HepG2 (cell line): ENCODE measurements at regions of chr22 and their contacts with region 1.

Region 1: GRCh38 chr22:32265882-32266767 is 11.0 kb upstream of the SLC5A4 start:
- DNase-seq: peak; percentile 62
- ATAC-seq: peak; percentile 86
- H3K4me3 ChIP-seq: no peak overlapping the region
- H3K27ac ChIP-seq: no peak overlapping the region
- H3K4me1 ChIP-seq: 0 out of 2 replicates have a peak, but pooled peaks cover 6% of the 10 kb centered on the region
- H3K27me3 ChIP-seq: no peaks in the 10 kb centered on the region
- CTCF ChIP-seq: peak; percentile 85
- EP300 ChIP-seq: no peak
- POLR2A ChIP-seq: no peak
- RAD21 ChIP-seq: peak; percentile 70

Region 2: DNA sequence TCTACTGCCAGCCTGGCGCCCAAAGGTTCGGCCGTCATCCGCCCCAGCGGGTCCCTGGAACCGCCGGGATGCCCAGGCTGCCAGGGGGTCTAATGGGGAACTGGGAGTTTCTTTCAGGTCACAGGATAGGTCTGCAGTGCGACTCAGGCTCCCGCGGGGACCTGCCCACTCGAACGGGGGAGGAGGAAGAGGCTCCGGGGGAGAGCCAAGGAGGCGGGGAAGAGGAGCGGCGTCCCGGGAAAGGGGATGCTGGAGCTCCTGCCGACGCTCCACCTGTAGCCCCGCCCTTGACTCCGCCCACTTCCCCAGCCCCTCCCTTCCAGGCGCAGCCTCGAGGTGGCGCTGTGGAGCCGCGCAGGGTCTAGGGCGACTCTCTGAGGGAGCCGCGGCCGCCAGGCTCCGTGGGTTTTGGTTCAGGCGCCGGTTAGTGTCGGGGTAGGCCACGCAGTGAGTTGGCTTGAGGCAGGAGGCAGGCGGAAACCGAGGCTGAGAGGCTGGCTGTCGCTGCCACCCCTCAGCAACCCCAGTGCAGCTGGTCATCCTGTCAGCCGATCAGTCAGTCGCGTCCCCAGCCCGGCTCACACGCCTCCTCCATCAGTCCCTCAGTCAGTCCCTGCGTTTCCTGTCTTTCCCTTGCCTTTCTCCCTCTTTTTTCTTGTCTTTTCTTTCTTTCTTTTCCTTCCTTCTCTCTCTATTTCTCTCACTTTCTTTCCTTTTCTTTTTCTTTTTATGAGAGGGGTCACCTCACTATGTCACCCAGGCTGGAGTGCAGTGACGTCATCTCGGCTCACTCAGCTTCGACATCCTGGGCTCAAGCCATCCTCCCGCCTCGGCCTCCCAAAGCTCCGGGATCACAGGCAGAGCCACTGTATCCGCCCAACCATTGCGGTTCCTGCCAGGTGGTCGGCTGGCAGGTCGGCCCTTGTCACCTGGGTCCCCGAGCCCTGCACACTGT is 295.4 kb before region 1 on chr22:
- CTCF ChIA-PET with region 1: no interaction called
- POLR2A ChIA-PET with region 1: no interaction called
- in situ Hi-C with region 1: loop called (anchors 10 kb)
- intact Hi-C with region 1: no loop called
- DNase-seq: peak; percentile 31
- ATAC-seq: peak; percentile 83
- H3K4me3 ChIP-seq: peak overlapping the region; percentile 42 to 74 (median 46)
- H3K27ac ChIP-seq: no peak overlapping the region
- H3K4me1 ChIP-seq: peaks cover 27% of the 10 kb centered on the region
- H3K27me3 ChIP-seq: peaks cover 0 to 9% of the 10 kb centered on the region in 2 experiments; a peak in 3 of 5 replicates
- CTCF ChIP-seq: peak; percentile 94
- EP300 ChIP-seq: no peak
- POLR2A ChIP-seq: no peak
- RAD21 ChIP-seq: peak; percentile 51; the same call in 1 of the 2 replicates

Region 3: GRCh38 chr22:31977141-31977841 is 288.8 kb before region 1 on chr22:
- CTCF ChIA-PET with region 1: interaction called, 11 read pairs
- POLR2A ChIA-PET with region 1: no interaction called
- in situ Hi-C with region 1: loop called (anchors 10 kb)
- intact Hi-C with region 1: no loop called
- DNase-seq: peak; percentile 62
- ATAC-seq: peak; percentile 92
- H3K4me3 ChIP-seq: no peak overlapping the region
- H3K27ac ChIP-seq: no peak overlapping the region
- H3K4me1 ChIP-seq: peaks cover 4% of the 10 kb centered on the region
- H3K27me3 ChIP-seq: peaks cover 0 to 7% of the 10 kb centered on the region in 2 experiments; a peak in 2 of 5 replicates
- CTCF ChIP-seq: peak; percentile 93
- EP300 ChIP-seq: no peak
- POLR2A ChIP-seq: no peak
- RAD21 ChIP-seq: peak; percentile 73

Region 4: DNA sequence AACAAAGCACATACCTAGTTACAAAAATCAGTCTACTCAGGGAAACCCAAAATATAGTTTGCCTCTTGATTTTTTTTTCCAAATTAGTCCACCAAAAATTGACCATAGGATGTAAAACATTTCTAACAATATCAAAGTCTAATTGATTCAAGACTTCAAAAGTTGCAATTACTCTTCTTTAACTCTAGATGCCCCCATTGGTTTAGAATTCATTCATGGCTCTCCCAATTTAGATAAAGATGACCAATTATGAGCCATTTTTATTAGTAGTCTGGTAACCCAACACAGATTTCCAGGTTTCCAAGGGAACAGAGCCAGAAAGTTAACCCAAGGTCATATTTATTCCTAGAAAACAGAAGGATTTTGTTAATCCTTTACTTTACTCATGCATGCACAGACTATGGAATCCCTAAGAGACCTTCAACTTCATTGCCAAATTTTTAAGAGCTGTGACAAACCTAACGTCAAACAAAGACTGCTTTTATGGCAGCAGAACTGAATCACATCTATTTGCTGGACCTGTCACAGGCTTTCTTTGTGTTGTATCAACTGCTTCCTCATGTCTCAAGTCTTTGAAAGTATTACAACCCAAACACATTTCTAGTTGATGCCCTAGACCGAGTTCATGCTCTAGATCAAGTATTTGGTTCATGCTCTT is 162.3 kb before region 1 on chr22:
- CTCF ChIA-PET with region 1: interaction called, 6 read pairs
- POLR2A ChIA-PET with region 1: no interaction called
- in situ Hi-C with region 1: loop called (anchors 10 kb)
- intact Hi-C with region 1: no loop called
- DNase-seq: no peak
- ATAC-seq: no peak
- H3K4me3 ChIP-seq: no peak overlapping the region
- H3K27ac ChIP-seq: no peak overlapping the region
- H3K4me1 ChIP-seq: no peaks in the 10 kb centered on the region
- H3K27me3 ChIP-seq: no peaks in the 10 kb centered on the region
- CTCF ChIP-seq: peak; percentile 32; the same call in 1 of the 2 replicates
- EP300 ChIP-seq: no peak
- POLR2A ChIP-seq: no peak
- RAD21 ChIP-seq: no peak

Region 5: DNA sequence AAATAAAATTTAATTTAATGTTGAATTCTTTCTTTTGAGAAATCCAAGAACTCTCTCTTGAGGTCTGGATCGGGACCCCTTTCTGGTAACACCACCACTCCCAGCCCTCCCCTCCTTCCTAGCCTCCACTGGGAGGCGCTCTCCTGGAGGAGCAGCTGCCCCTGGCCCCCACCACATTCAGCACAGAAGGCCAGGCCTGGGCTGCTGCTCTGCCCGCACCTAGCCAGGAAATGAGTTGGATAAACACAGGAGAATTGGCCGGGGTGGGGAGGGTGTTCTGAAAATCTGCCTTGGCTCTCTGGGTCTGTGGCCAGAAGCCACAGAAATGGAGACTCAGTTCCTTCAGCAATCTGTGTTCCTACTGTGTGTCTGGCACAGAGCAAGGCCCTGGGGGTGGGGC is 138.2 kb before region 1 on chr22:
- CTCF ChIA-PET with region 1: no interaction called
- POLR2A ChIA-PET with region 1: no interaction called
- in situ Hi-C with region 1: no loop called
- intact Hi-C with region 1: loop called (anchors 5 kb)
- DNase-seq: no peak
- ATAC-seq: no peak
- H3K4me3 ChIP-seq: no peak overlapping the region
- H3K27ac ChIP-seq: no peak overlapping the region
- H3K4me1 ChIP-seq: no peaks in the 10 kb centered on the region
- H3K27me3 ChIP-seq: peaks cover 0 to 1% of the 10 kb centered on the region in 2 experiments; a peak in 1 of 5 replicates
- CTCF ChIP-seq: no peak
- EP300 ChIP-seq: no peak
- POLR2A ChIP-seq: no peak
- RAD21 ChIP-seq: no peak

Region 6: DNA sequence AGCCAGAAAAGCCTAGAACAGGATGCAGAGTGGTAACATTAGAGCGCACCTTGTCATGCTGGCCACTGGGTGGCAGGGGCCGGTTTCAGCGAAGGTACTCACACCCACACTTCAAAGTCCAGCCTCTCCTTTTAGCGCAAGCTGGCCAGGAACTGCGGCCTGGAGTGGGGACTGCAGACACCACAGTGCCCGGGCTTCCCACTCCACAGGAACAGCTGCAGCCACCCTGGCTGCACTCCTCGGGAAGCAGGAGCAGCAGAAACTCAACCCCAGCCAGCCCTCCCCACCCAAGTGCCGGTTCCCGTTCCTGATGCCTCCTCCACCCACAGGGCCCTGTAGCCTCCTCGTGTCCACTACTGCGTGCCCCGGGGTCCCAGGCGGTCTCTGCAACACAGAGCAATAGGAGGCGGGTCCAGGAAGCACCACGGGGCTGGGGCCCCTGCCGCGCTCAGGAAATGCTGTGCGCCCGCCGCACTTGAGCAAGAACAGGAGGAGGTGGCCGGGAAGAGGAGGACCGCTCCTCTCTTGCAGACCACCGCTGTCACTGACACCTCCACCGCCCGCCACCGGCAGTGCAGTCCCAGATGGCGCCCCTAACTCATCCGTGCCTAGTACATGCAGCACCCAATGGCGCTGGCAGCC is 63.5 kb before region 1 on chr22:
- CTCF ChIA-PET with region 1: interaction called, 20 read pairs
- POLR2A ChIA-PET with region 1: no interaction called
- in situ Hi-C with region 1: loop called (anchors 5 kb)
- intact Hi-C with region 1: loop called (anchors 1 kb)
- DNase-seq: peak; percentile 68
- ATAC-seq: peak; percentile 75
- H3K4me3 ChIP-seq: peak overlapping the region in 1 of 3 experiments; percentile 42; a peak in 2 of 6 replicates
- H3K27ac ChIP-seq: no peak overlapping the region
- H3K4me1 ChIP-seq: peaks cover 27% of the 10 kb centered on the region
- H3K27me3 ChIP-seq: peaks cover 1 to 3% of the 10 kb centered on the region in 2 experiments; a peak in 1 of 5 replicates
- CTCF ChIP-seq: peak; percentile 92
- EP300 ChIP-seq: no peak
- POLR2A ChIP-seq: no peak
- RAD21 ChIP-seq: peak; percentile 79

Region 7: DNA sequence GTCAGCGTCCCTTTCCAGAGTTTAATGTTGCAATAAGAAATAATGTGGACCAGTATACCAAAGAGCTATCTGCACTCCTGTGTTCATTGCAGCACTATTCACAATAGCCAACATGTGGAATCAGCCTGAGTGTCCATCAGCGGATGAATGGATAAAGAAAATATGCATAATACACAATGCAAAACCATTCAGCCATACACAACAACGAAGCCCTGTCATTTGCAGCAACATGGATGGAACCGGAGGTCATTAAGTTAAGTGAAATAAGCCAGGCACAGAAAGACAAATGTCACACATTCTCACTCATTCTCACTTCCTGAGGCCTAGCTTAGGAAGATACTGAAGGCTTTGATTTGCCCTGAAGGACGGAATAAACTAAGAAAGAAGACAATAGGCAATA is 33.0 kb before region 1 on chr22:
- CTCF ChIA-PET with region 1: no interaction called
- POLR2A ChIA-PET with region 1: no interaction called
- in situ Hi-C with region 1: no loop called
- intact Hi-C with region 1: no loop called
- DNase-seq: no peak
- ATAC-seq: no peak
- H3K4me3 ChIP-seq: no peak overlapping the region
- H3K27ac ChIP-seq: no peak overlapping the region
- H3K4me1 ChIP-seq: no peaks in the 10 kb centered on the region
- H3K27me3 ChIP-seq: no peaks in the 10 kb centered on the region
- CTCF ChIP-seq: no peak
- EP300 ChIP-seq: no peak
- POLR2A ChIP-seq: no peak
- RAD21 ChIP-seq: no peak

Region 8: DNA sequence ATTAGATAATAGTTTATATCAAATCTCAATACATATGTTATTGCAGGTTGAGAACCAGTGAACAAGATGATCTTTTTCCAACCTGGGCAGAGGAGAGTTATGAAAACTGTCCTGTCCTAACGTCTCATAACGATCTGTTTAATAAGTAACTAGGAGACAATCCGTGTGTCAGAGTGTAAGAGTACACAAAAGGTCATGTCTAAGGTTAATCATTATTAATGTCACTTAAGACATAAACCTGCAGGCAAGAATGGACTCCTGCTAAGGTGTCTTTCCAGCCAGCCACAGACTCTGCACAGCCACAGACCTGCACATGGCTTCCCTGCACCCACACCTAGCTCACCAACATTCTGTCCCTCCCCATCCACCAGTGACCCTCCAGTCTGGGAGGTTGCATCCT is 21.1 kb before region 1 on chr22:
- CTCF ChIA-PET with region 1: no interaction called
- POLR2A ChIA-PET with region 1: no interaction called
- in situ Hi-C with region 1: no loop called
- intact Hi-C with region 1: no loop called
- DNase-seq: peak; percentile 65
- ATAC-seq: peak; percentile 90
- H3K4me3 ChIP-seq: peak overlapping the region in 1 of 3 experiments; percentile 15; a peak in 1 of 6 replicates
- H3K27ac ChIP-seq: no peak overlapping the region
- H3K4me1 ChIP-seq: peaks cover 57% of the 10 kb centered on the region
- H3K27me3 ChIP-seq: no peaks in the 10 kb centered on the region; a peak in 1 of 5 replicates
- CTCF ChIP-seq: no peak
- EP300 ChIP-seq: no peak
- POLR2A ChIP-seq: no peak
- RAD21 ChIP-seq: no peak

Region 9: DNA sequence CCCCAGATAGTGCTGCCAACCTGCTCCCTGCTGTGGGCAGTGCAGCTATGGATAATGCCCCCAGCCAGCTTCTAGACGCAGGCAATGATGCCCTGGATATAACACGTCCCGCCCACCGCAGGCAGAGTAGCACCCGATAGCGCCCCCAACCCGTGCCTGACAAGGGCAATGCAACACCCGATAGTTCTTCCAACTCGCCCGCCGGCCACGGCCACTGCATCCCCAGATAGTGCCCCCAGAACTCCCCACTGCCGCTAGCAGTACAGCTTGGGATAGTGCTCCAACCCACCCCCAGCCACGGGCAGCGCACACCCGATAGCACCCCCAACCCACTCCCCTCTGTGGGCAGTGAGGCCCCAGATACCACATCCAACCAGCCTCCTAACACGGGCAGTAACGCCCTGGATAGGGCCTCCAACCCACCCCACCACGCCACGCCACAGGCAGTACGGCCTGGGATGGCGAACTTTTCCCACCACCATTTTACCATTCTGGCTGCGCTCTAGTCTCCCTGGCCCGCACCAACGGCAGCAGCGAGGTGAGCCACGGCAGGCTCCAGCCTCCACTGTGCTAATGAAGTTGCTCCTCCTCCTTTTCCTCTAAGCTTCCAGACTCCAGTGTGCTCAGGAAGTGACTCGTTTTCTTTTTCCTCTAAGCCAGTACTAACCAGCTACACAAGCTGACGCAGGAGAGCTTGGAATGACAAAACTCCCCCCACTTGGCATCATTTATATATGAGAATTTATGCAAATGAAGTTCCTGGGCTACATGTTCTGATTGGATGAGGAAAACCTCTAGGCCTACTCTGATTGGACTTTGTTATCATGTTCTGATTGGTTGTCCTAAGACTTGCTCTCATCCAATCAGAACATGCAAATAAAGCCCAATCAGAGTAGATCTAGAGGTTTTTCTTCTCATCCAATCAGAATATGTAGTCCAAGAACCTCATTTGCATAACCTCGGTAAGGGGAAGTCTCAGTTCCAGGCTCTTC is 88.5 kb after region 1 on chr22:
- CTCF ChIA-PET with region 1: no interaction called
- POLR2A ChIA-PET with region 1: no interaction called
- in situ Hi-C with region 1: no loop called
- intact Hi-C with region 1: loop called (anchors 1 kb)
- DNase-seq: no peak
- ATAC-seq: no peak
- H3K4me3 ChIP-seq: no peak overlapping the region
- H3K27ac ChIP-seq: no peak overlapping the region
- H3K4me1 ChIP-seq: no peaks in the 10 kb centered on the region
- H3K27me3 ChIP-seq: no peaks in the 10 kb centered on the region
- CTCF ChIP-seq: no peak
- EP300 ChIP-seq: no peak
- POLR2A ChIP-seq: no peak
- RAD21 ChIP-seq: no peak